ENCODE measurements at regions of chr6 and their contacts with region 1.

Region 1: GRCh38 chr6:29589423-29590048 is 4.6 kb downstream of the OR2H2 start:
- DNase-seq: peak in 1 of 2 experiments; percentile 75
- H3K4me3 ChIP-seq: no peak overlapping the region
- H3K27ac ChIP-seq: no peak overlapping the region
- H3K4me1 ChIP-seq: no peaks in the 10 kb centered on the region
- H3K27me3 ChIP-seq: no peaks in the 10 kb centered on the region
- CTCF ChIP-seq: peak; percentile 70 to 96 (median 87)
- EP300 ChIP-seq: no peak
- POLR2A ChIP-seq: peak in 1 of 2 experiments; percentile 9; a peak in 1 of 3 replicates
- RAD21 ChIP-seq: peak; percentile 99 to 100

Region 2: DNA sequence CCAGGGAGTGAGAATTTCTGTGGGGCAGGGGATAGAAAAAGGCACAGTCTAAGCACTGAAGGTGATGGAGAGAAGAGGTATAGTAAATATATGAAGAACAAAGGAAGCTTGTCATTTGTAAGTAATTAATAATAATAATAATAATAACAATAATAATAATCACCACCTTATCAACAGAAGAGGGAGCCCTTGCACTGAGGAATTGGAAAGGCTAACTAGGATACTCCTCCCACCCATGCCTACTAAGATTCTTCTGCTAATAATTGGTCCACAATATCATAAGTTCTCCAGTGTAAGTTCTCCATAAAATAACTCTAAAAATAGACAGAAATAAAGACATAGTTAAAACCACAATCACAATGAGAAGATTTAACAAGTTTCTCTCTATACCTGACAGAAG is 213.5 kb before region 1 on chr6:
- CTCF ChIA-PET with region 1: interaction called, 53 read pairs
- POLR2A ChIA-PET with region 1: interaction called, 3 read pairs
- DNase-seq: no peak
- H3K4me3 ChIP-seq: no peak overlapping the region
- H3K27ac ChIP-seq: no peak overlapping the region
- H3K4me1 ChIP-seq: no peaks in the 10 kb centered on the region
- H3K27me3 ChIP-seq: no peaks in the 10 kb centered on the region
- CTCF ChIP-seq: peak in 1 of 3 experiments; percentile 32; a peak in 1 of 4 replicates
- EP300 ChIP-seq: no peak
- POLR2A ChIP-seq: no peak
- RAD21 ChIP-seq: peak; percentile 67 to 68

Region 3: GRCh38 chr6:29424575-29424974 is 165.0 kb before region 1 on chr6:
- CTCF ChIA-PET with region 1: interaction called, 13 read pairs
- POLR2A ChIA-PET with region 1: no interaction called
- DNase-seq: no peak
- H3K4me3 ChIP-seq: no peak overlapping the region
- H3K27ac ChIP-seq: no peak overlapping the region
- H3K4me1 ChIP-seq: no peaks in the 10 kb centered on the region
- H3K27me3 ChIP-seq: no peaks in the 10 kb centered on the region
- CTCF ChIP-seq: no peak
- EP300 ChIP-seq: no peak
- POLR2A ChIP-seq: no peak
- RAD21 ChIP-seq: no peak

Region 4: GRCh38 chr6:29531431-29532067 is 58.0 kb before region 1 on chr6:
- CTCF ChIA-PET with region 1: interaction called, 10 read pairs
- POLR2A ChIA-PET with region 1: no interaction called
- DNase-seq: peak in 1 of 2 experiments; percentile 36
- H3K4me3 ChIP-seq: no peak overlapping the region
- H3K27ac ChIP-seq: no peak overlapping the region
- H3K4me1 ChIP-seq: no peaks in the 10 kb centered on the region
- H3K27me3 ChIP-seq: no peaks in the 10 kb centered on the region; a peak in 1 of 7 replicates
- CTCF ChIP-seq: no peak
- EP300 ChIP-seq: no peak
- POLR2A ChIP-seq: no peak
- RAD21 ChIP-seq: no peak

Region 5: DNA sequence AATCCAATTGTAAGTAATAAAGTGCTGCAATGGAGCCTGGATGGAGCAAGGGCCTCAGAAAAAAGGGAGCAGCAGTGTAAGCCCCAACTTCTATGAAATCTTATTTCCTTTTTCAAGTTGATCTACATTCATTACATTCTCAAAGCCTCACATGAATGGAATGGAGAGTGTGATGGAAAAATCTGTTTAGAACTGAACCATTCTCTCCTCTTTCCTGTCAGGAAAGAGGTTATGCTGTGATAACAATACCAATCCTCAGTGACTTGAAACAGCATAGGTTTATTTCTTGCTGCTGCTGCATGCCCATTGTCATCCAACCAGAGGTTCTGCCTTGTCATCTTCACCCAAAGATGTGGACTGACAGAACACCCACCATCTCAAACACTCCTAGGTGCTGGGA is 13.5 kb before region 1 on chr6:
- CTCF ChIA-PET with region 1: interaction called, 27 read pairs
- POLR2A ChIA-PET with region 1: interaction called, 8 read pairs
- DNase-seq: no peak
- H3K4me3 ChIP-seq: no peak overlapping the region
- H3K27ac ChIP-seq: no peak overlapping the region
- H3K4me1 ChIP-seq: no peaks in the 10 kb centered on the region
- H3K27me3 ChIP-seq: no peaks in the 10 kb centered on the region
- CTCF ChIP-seq: no peak
- EP300 ChIP-seq: no peak
- POLR2A ChIP-seq: no peak
- RAD21 ChIP-seq: no peak

Region 6: DNA sequence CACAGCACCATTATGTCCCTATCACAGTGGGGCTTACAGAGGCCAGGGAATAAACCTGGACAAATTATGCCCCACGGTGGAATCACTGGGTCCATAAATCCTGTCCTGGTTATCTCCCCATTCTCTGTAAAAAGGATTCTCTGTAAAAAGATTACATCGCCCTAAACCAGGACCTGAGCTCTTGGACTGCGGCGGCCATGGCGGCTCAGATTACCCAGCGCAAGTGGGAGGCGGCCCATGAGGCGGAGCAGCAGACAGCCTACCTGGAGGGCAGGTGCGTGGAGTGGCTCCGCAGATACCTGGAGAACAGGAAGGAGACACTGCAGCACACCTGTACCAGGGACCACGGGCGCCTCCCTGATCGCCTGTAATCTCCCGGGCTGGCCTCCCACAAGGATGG is 344.4 kb after region 1 on chr6:
- CTCF ChIA-PET with region 1: no interaction called
- POLR2A ChIA-PET with region 1: no interaction called
- DNase-seq: no peak
- H3K4me3 ChIP-seq: no peak overlapping the region
- H3K27ac ChIP-seq: no peak overlapping the region
- H3K4me1 ChIP-seq: no peaks in the 10 kb centered on the region
- H3K27me3 ChIP-seq: no peaks in the 10 kb centered on the region
- CTCF ChIP-seq: no peak
- EP300 ChIP-seq: no peak
- POLR2A ChIP-seq: no peak
- RAD21 ChIP-seq: no peak